Activated T-helper 2 cell treated with anti-CD3 and anti-CD28 coated beads, Interferon-gamma antibody, Interleukin-2, Interleukin-4, amounts not matched to agents 10 μg/mL and 5 μg/mL and 100 μg/mL, durations not matched to agents 14 hours and 24 hours and 36 hours (primary cell): ENCODE measurements at regions of chr17 and their contacts with region 1.

Region 1: GRCh38 chr17:393806-394717 is 41.5 kb upstream of the RPH3AL start:
- DNase-seq: no peak
- H3K4me3 Mint-ChIP-seq: no peak overlapping the region
- H3K27ac Mint-ChIP-seq: no peak overlapping the region
- H3K4me1 Mint-ChIP-seq: peaks cover 5% of the 10 kb centered on the region
- H3K27me3 Mint-ChIP-seq: no peaks in the 10 kb centered on the region

Region 2: GRCh38 chr17:700504-701094 is 306.5 kb after region 1 on chr17:
- intact Hi-C with region 1: loop called (anchors 10 kb)
- DNase-seq: no peak
- H3K4me3 Mint-ChIP-seq: no peak overlapping the region
- H3K27ac Mint-ChIP-seq: peak overlapping the region; percentile 49
- H3K4me1 Mint-ChIP-seq: peaks cover 2% of the 10 kb centered on the region
- H3K27me3 Mint-ChIP-seq: no peaks in the 10 kb centered on the region